HAP-1 (cell line): ENCODE measurements at regions of chrX and their contacts with region 1.

Region 1: DNA sequence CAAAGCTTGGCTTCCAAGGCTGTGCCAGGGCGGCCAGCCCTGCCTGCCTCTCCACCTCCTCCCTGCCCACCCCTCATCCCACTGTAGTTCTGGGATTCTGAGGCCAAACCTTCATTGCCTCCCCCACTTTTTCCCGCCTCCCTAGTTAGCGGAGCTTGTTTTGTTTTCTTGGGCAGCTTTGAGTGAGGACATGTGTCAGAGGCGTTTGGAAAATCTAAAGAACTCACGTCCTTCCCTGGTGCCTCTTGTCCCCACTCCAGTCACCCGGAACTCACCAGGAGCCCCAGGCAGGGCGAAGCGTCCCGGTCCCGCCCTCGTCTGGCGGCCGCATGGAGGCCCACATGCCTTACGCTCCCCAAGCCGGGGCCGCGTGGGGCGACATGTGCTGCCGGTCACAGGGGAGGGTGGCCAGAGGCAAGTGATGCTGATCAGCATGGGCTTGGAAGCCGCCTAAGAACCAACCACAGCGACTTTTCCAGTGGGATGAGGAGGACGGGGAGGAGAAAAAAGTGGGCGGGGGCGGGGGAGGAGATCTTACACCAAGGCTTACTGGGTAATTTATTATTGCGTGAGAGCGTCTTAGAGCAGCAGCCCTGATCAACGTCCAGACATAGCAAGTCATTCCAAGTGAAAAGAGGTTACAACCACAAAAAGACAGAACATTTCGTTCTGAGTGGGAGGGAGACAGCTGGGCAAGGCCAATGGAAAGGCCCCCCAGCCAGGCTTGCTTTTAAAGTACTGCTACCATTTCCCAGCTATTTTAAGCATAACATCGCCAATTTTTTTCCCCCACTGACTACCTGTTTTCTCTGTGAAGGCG is 48.5 kb downstream of the PRPS1 start:
- DNase-seq: peak; percentile 88 to 89
- H3K4me3 ChIP-seq: peak overlapping the region; percentile 42
- H3K4me1 ChIP-seq: peaks cover 36% of the 10 kb centered on the region
- H3K27me3 ChIP-seq: no peaks in the 10 kb centered on the region

Region 2: GRCh38 chrX:107716816-107717700 is 40.3 kb after region 1 on chrX:
- in situ Hi-C with region 1: loop called (anchors 5 kb)
- DNase-seq: peak; percentile 72 to 86
- H3K4me3 ChIP-seq: peak overlapping the region; percentile 70
- H3K4me1 ChIP-seq: peaks cover 21% of the 10 kb centered on the region
- H3K27me3 ChIP-seq: no peaks in the 10 kb centered on the region